Ovary (tissue), 10 donors: ENCODE measurements at regions of chr9 and their contacts with region 1.

Region 1: DNA sequence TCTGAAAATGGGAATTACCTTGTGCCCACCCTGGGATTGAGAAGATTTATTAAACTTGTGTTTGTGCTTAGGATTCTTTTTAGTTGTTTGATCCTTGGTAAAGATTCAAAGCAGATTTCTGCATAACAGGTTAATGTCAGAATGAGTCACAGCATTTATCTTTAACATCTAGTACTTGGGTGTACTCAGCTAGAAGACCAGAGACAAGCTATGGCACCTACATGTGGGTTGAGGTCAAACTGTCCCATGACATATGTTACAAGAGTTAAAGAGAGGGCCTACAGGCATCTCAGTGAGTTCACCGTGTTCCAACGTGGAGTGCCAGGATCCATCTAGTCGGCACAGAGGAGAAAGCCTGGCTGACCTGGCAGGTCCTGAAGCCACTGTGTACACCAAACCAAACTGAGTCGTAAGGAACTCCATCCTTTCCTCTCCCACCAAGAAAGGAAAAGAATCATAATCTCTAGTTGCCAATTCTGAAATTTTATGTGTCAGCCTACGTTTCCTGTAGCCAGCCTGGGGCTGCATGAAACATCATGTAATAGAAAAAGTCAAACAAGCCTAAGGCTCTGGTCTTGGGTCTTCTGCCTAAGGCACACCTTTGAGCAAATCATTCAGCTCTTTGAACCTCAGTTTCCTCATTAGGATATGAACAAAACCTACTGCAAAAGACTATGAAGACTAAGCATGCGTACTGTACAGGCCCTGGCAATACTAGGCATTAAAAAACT is 73.7 kb downstream of the RCL1 start:
- DNase-seq: no peak
- H3K4me3 ChIP-seq: no peak overlapping the region
- H3K27ac ChIP-seq: no peak overlapping the region
- H3K4me1 ChIP-seq: peaks cover 8% of the 10 kb centered on the region
- H3K27me3 ChIP-seq: no peaks in the 10 kb centered on the region
- CTCF ChIP-seq: no peak
- EP300 ChIP-seq: no peak
- POLR2A ChIP-seq: no peak

Region 2: DNA sequence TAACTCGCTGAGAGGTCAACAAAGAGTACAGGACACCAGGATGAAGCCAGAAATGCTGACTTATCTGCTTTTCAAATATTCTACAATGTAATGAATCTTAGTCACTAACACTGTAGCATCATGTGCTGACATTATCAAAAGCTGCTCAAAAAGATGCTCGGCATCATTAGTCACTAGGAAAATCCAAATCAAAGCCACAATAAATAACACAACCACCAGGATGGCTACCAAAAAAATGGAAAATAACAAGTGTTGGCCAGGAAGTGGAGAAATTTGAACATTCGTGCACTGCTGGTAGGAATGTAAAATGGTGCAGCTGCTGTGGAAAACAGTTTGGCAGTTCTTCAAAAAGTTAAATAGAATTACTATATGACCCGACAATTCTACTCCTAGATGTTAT is 835.7 kb before region 1 on chr9:
- intact Hi-C with region 1: loop called in 1 of 4 experiments (anchors 5 kb)
- DNase-seq: no peak
- H3K4me3 ChIP-seq: no peak overlapping the region
- H3K27ac ChIP-seq: no peak overlapping the region
- H3K4me1 ChIP-seq: peaks cover under 1% of the 10 kb centered on the region
- H3K27me3 ChIP-seq: no peaks in the 10 kb centered on the region
- CTCF ChIP-seq: no peak
- EP300 ChIP-seq: no peak
- POLR2A ChIP-seq: no peak